ENCODE measurements at regions of chr17 and their contacts with region 1.

Region 1: GRCh38 chr17:78708510-78708973 is 73.5 kb downstream of the CYTH1 start:
- DNase-seq: peak; percentile 59 to 72
- H3K4me3 ChIP-seq: no peak overlapping the region
- H3K27ac ChIP-seq: no peak overlapping the region
- H3K4me1 ChIP-seq: no peaks in the 10 kb centered on the region
- H3K27me3 ChIP-seq: no peaks in the 10 kb centered on the region
- CTCF ChIP-seq: peak; percentile 92 to 96 (median 92)
- EP300 ChIP-seq: no peak
- POLR2A ChIP-seq: no peak
- RAD21 ChIP-seq: peak; percentile 98 to 99

Region 2: GRCh38 chr17:78557598-78558039 is 150.9 kb before region 1 on chr17:
- CTCF ChIA-PET with region 1: interaction called, 15 read pairs
- POLR2A ChIA-PET with region 1: no interaction called
- DNase-seq: no peak
- H3K4me3 ChIP-seq: no peak overlapping the region
- H3K27ac ChIP-seq: no peak overlapping the region
- H3K4me1 ChIP-seq: no peaks in the 10 kb centered on the region
- H3K27me3 ChIP-seq: no peaks in the 10 kb centered on the region
- CTCF ChIP-seq: no peak
- EP300 ChIP-seq: no peak
- POLR2A ChIP-seq: no peak
- RAD21 ChIP-seq: no peak

Region 3: DNA sequence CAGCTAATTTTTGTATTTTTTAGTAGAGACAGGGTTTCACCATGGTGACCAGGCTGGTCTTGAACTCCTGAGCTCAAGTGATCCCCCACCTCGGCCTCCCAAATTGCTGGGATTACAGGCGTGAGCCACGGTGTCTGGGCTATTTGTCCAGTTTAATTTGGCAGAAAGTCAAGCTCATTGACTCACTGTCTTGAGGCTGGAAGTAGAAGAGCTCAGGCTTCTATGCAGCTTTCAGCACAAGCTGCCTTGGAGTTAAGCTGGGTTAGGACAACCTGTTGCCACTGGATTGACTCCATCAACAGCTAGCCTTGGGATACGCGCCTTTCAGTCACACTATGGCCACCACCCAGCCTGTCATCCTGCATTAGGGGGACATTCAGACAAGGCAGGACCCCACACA is 55.2 kb before region 1 on chr17:
- CTCF ChIA-PET with region 1: interaction called, 10 read pairs
- POLR2A ChIA-PET with region 1: no interaction called
- DNase-seq: no peak
- H3K4me3 ChIP-seq: no peak overlapping the region
- H3K27ac ChIP-seq: no peak overlapping the region
- H3K4me1 ChIP-seq: no peaks in the 10 kb centered on the region
- H3K27me3 ChIP-seq: no peaks in the 10 kb centered on the region
- CTCF ChIP-seq: no peak
- EP300 ChIP-seq: no peak
- POLR2A ChIP-seq: no peak
- RAD21 ChIP-seq: no peak

Region 4: DNA sequence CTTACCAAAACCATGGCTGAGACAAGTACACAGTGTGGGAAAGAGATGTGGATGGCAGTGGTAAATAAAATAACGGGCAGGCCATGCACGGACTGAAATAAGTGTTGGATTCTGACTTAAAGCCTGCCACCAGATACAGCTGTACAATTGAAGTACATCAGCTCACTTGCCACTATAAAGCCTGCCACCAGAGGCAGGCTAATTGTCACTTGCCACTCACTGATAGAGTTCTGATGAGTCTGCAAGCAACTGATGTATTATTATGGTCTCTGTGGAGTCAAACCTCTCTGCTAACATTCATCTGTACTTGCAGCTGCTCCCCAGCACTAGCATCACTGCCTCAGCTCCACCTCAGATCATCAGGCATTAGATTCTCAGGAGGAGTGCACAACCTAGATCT is 19.5 kb before region 1 on chr17:
- CTCF ChIA-PET with region 1: interaction called, 10 read pairs
- POLR2A ChIA-PET with region 1: no interaction called
- DNase-seq: no peak
- H3K4me3 ChIP-seq: no peak overlapping the region
- H3K27ac ChIP-seq: no peak overlapping the region
- H3K4me1 ChIP-seq: peaks cover 0 to 2% (median under 1%) of the 10 kb centered on the region in 4 experiments; a peak in 1 of 7 replicates
- H3K27me3 ChIP-seq: no peaks in the 10 kb centered on the region
- CTCF ChIP-seq: peak in 1 of 3 experiments; percentile 17; a peak in 1 of 4 replicates
- EP300 ChIP-seq: no peak
- POLR2A ChIP-seq: no peak
- RAD21 ChIP-seq: no peak

Region 5: GRCh38 chr17:78759203-78759968 is 50.8 kb after region 1 on chr17:
- CTCF ChIA-PET with region 1: no interaction called
- POLR2A ChIA-PET with region 1: no interaction called
- DNase-seq: no peak
- H3K4me3 ChIP-seq: no peak overlapping the region
- H3K27ac ChIP-seq: no peak overlapping the region
- H3K4me1 ChIP-seq: peaks cover 0 to 6% (median 3%) of the 10 kb centered on the region in 4 experiments; a peak in 4 of 7 replicates
- H3K27me3 ChIP-seq: no peaks in the 10 kb centered on the region
- CTCF ChIP-seq: no peak
- EP300 ChIP-seq: no peak
- POLR2A ChIP-seq: no peak
- RAD21 ChIP-seq: no peak

Region 6: DNA sequence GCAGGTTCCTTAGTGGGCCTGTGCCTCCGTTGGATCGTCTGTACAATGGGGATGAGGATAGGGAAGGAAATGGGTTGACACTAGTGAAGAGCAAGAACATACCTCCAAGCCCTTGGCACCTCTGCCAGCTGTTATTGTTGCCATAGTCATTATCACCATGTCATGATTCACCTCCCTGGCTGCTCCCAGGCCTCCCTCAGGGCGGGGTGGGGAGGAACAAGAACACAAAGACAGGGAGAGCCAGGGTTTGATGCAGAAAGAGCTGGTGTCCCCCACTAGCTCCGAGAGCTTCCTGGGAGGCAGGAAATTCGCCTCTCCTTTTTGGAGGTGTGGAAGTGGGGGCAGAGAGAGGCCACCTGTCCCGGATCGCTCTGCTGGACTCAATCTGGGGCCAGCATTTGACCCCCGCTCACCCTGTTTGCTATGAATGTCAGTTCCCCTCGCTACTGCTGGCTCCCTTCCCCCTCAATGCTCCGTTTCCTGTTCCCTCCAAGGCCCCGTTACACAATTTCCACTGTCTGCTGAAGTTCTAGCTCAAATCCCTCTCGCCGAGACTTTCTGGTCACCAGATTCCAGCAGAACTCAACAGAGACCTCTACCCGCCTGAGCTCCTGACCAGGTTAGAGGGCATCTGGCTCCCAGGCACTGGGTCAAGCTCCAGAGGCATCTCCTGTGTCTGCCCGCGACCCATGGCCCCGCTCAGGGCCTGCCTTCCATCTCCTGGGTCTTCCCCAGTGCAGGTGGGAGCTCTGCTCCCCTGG is 207.5 kb after region 1 on chr17:
- CTCF ChIA-PET with region 1: no interaction called
- POLR2A ChIA-PET with region 1: no interaction called
- DNase-seq: no peak
- H3K4me3 ChIP-seq: no peak overlapping the region
- H3K27ac ChIP-seq: no peak overlapping the region
- H3K4me1 ChIP-seq: peaks cover 0 to 11% (median 4%) of the 10 kb centered on the region in 4 experiments; a peak in 6 of 7 replicates
- H3K27me3 ChIP-seq: no peaks in the 10 kb centered on the region
- CTCF ChIP-seq: no peak
- EP300 ChIP-seq: no peak
- POLR2A ChIP-seq: no peak
- RAD21 ChIP-seq: no peak

Measured in H1 (cell line).